Panc1 (cell line): ENCODE measurements at regions of chr2 and their contacts with region 1.

Region 1: GRCh38 chr2:178128836-178129630 is 16.8 kb downstream of the RBM45 start:
- DNase-seq: no peak
- ATAC-seq: no peak
- H3K4me3 ChIP-seq: no peak overlapping the region
- H3K27ac ChIP-seq: no peak overlapping the region
- H3K4me1 ChIP-seq: no peaks in the 10 kb centered on the region
- H3K27me3 ChIP-seq: no peaks in the 10 kb centered on the region
- CTCF ChIP-seq: no peak

Region 2: DNA sequence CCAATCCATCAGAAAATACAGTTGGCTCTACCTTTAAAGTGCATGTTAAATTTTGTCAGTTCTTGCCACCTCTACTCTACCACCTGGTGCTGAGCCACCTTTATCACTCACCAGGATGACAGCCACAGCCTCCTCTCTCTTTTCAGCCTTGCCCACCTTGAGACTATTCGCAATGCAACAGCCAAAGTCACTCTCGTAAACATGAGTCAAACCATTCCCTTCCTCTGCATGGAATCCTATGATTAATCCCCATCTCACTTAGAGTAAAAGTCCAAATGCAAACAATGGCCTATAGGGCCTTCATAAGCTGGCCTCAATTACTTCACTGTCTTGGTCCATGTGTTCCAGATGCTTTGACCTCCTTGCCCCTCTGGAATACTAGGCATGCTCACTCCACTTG is 59.4 kb after region 1 on chr2:
- CTCF ChIA-PET with region 1: no interaction called
- POLR2A ChIA-PET with region 1: no interaction called
- in situ Hi-C with region 1: no loop called
- intact Hi-C with region 1: no loop called
- DNase-seq: no peak
- ATAC-seq: no peak
- H3K4me3 ChIP-seq: no peak overlapping the region
- H3K27ac ChIP-seq: no peak overlapping the region
- H3K4me1 ChIP-seq: no peaks in the 10 kb centered on the region
- H3K27me3 ChIP-seq: peaks cover 8% of the 10 kb centered on the region
- CTCF ChIP-seq: no peak

Region 3: DNA sequence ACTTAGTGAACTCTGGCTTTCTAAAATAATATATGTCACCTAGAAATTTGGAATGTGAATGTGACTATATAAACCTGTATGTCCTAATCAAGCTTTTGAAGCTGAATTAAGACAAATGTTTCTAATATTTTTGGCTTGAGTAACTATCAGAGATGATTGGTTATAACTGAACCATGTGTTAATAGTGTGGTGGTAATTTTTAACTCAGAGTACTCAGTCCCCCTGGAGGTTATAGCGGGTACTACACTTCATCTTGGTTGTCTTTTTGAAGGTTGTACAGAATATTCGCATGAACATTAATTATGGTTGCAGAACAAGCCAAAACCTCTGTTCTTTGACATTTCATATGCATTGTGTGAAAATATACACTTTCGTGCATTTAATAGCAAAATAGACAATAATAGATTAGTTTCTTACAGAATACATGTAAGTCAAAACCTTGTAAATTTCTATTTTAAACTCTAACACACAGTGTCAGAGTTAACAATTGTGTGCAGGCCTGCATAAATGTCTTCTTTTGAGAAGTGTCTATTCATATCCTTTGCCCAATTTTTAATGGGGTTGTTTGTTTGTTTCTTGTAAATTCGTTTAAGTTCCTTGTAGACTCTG is 151.3 kb after region 1 on chr2:
- CTCF ChIA-PET with region 1: no interaction called
- POLR2A ChIA-PET with region 1: no interaction called
- in situ Hi-C with region 1: no loop called
- intact Hi-C with region 1: loop called (anchors 2 kb)
- DNase-seq: peak; percentile 25
- ATAC-seq: 0 out of 2 replicates have a peak, but pooled peaks have one; percentile 42
- H3K4me3 ChIP-seq: no peak overlapping the region
- H3K27ac ChIP-seq: no peak overlapping the region
- H3K4me1 ChIP-seq: no peaks in the 10 kb centered on the region
- H3K27me3 ChIP-seq: no peaks in the 10 kb centered on the region; the same call in 1 of the 2 replicates
- CTCF ChIP-seq: peak; percentile 76; the same call in 1 of the 2 replicates

Region 4: DNA sequence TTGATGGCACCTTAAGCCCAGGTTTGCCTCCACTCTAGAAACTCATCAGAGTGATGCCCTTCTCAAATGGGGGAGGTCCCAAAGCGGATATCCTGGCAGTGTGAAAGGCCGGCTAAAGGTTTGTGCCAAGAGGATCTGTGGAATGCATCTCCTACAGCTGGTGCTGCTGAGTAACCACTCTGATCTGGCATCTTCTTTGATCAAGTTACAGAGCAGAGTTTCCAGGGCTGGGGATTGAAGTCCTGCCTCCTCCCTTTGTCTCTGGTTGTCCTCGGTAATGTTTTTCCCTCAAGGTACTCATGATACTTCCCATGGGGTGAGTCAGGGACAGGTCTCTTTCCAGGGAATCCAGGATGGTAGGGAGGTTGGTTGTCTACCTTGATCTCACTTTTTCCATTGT is 297.4 kb after region 1 on chr2:
- CTCF ChIA-PET with region 1: no interaction called
- POLR2A ChIA-PET with region 1: no interaction called
- in situ Hi-C with region 1: loop called (anchors 10 kb)
- intact Hi-C with region 1: no loop called
- DNase-seq: no peak
- ATAC-seq: no peak
- H3K4me3 ChIP-seq: no peak overlapping the region
- H3K27ac ChIP-seq: no peak overlapping the region
- H3K4me1 ChIP-seq: no peaks in the 10 kb centered on the region
- H3K27me3 ChIP-seq: no peaks in the 10 kb centered on the region
- CTCF ChIP-seq: no peak